ENCODE measurements at regions of chr1 and their contacts with region 1.

Region 1: GRCh38 chr1:226296911-226297310 is 12.1 kb downstream of the LIN9 start:
- DNase-seq: no peak

Region 2: GRCh38 chr1:226809785-226810571 is 513.1 kb after region 1 on chr1:
- intact Hi-C with region 1: loop called in 1 of 2 experiments (anchors 5 kb)
- DNase-seq: no peak